ENCODE measurements at regions of chr20 and their contacts with region 1.

Region 1: DNA sequence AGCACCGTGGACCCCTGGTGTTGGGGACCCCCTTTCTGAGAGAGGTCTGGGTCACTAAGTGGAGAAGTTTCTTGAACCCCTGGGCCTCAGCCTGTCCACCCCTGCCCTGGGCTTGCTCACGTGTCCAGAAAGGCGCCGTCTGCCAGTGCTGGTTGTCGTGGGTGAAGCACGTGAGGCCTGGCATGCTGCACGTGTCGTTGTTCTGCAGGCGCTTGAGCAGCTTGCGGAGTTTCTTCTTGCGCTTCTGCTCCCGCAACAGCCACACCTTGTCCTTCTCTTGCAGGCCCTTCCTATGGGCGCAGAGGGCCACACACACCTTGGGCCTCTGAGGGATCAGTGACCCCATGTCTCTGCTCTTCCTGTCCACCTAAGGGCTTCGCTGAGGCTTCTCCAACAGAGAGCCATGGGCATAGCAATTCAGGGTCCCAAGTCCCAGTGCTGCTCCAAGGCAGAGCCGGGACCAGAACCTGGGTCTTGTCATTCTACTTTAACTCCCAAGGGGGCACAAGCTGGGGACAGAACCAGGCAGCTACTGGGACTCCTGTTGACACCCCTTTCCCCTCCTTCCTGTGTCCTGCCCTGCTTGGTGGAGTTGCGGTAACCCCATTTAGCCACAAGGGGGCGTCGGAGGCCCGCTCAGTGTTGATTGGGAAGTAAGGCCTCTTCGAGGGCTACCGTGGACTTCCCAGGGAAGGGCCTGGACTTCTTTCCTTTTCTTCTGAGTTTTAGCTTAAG is 121.8 kb downstream of the SULF2 start:
- DNase-seq: peak; percentile 86
- ATAC-seq: peak; percentile 90
- H3K4me3 ChIP-seq: no peak overlapping the region
- H3K27ac ChIP-seq: no peak overlapping the region
- H3K4me1 ChIP-seq: peaks cover 7% of the 10 kb centered on the region
- H3K27me3 ChIP-seq: no peaks in the 10 kb centered on the region
- CTCF ChIP-seq: peak; percentile 98

Region 2: GRCh38 chr20:47568001-47568407 is 95.5 kb before region 1 on chr20:
- intact Hi-C with region 1: no loop called
- DNase-seq: no peak
- ATAC-seq: peak; percentile 65
- H3K4me3 ChIP-seq: no peak overlapping the region
- H3K27ac ChIP-seq: peak overlapping the region; percentile 63
- H3K4me1 ChIP-seq: peaks cover 31% of the 10 kb centered on the region
- H3K27me3 ChIP-seq: no peaks in the 10 kb centered on the region
- CTCF ChIP-seq: no peak

Region 3: GRCh38 chr20:47610247-47610944 is 53.1 kb before region 1 on chr20:
- intact Hi-C with region 1: no loop called
- DNase-seq: no peak
- ATAC-seq: peak; percentile 66
- H3K4me3 ChIP-seq: no peak overlapping the region
- H3K27ac ChIP-seq: peak overlapping the region; percentile 7
- H3K4me1 ChIP-seq: peaks cover 26% of the 10 kb centered on the region
- H3K27me3 ChIP-seq: no peaks in the 10 kb centered on the region
- CTCF ChIP-seq: no peak

Region 4: DNA sequence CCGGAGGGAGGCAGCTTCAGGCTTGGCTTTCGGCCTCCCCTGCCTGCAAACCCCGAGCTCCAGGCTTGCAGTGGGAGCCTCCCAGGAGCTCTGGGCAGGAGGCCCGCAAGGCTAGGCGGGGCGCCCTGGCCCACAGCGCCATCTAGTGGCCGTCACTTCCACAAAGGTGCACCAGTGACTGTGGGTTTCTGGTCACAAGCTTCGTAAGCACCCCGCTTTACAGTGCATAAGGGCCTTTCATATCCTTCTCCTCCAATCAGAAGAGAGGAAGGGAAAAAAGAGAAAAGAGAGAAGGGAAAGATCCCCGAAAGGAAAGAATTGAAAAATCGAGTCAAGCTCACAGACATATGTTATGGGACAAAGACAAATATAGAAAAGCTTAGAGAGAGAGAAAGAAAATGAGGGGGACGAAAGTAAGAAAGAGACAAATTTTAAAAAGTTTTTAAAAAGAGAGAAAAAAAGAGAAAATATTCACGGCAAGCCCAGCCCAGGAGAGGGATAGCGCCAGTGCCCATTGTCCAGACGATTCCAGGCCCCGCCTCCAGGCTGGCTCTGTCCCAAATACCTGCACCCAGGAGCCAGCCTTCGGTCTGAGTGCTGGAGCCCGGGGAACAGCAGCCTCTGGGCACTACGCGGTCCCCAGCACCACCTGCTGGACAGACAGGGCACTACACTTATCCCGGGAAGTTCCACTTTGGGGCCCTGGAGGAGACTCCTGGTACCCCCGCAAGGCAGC is 957.2 kb after region 1 on chr20:
- intact Hi-C with region 1: loop called (anchors 10 kb)
- DNase-seq: peak; percentile 92
- ATAC-seq: peak; percentile 92
- H3K4me3 ChIP-seq: peak overlapping the region; percentile 22
- H3K27ac ChIP-seq: no peak overlapping the region
- H3K4me1 ChIP-seq: peaks cover 17% of the 10 kb centered on the region
- H3K27me3 ChIP-seq: no peaks in the 10 kb centered on the region
- CTCF ChIP-seq: peak; percentile 85